ENCODE measurements at regions of chr13 and their contacts with region 1.

Region 1: DNA sequence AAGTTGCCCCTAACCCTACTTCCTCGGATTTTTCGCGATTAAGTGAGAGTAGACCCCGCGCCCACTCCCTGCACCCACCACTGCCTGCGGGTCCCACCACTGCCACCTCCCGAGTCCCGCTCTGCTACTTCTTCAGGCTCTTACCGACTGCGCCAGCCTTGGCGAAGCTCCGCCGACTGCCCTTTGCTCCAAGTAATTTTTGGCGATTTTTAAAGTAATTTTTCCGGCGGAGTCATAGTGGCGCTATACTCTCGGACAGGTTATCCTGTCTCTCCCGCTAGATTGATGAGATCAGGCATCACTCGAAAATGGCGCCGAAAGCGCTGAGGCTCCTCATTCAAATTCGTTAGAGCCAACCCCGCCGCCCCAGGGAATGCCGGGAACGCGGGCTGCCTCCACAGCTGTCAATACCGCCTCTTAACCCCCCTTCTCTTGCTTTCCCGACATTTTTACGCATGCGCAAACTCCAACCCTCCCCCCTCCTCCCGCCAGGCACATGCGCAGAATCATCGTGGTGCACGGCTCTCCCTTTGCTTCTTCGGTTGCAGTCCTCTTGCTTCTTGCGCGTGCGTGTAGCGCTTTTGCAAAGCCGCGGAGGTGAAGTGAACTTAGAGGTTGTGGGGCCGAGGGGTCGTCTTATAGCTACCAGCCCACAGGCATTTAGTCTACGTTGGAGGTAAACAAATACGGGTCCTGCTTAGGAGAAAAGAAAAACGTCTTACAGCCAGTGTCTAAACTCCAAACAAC is 66.6 kb downstream of the KCNRG start:
- DNase-seq: peak; percentile 98
- H3K4me3 ChIP-seq: peak overlapping the region; percentile 81 to 82
- H3K27ac ChIP-seq: peak overlapping the region; percentile 87 to 92
- H3K4me1 ChIP-seq: peaks cover 8% of the 10 kb centered on the region
- H3K27me3 ChIP-seq: no peaks in the 10 kb centered on the region
- CTCF ChIP-seq: peak in 1 of 3 experiments; percentile 2
- POLR2A ChIP-seq: peak; percentile 35

Region 2: GRCh38 chr13:49996951-49997895 is 84.6 kb before region 1 on chr13 and contains the start of gene TRIM13:
- intact Hi-C with region 1: loop called (anchors 5 kb)
- DNase-seq: peak; percentile 94
- H3K4me3 ChIP-seq: peak within 1 kb of the TSS; percentile 94 to 95
- H3K27ac ChIP-seq: peak within 1 kb of the TSS; percentile 98 to 100
- H3K4me1 ChIP-seq: peaks cover 18% of the 10 kb centered on the region
- H3K27me3 ChIP-seq: no peaks in the 10 kb centered on the region
- CTCF ChIP-seq: peak; percentile 62 to 69 (median 63)
- POLR2A ChIP-seq: peak; percentile 45
- total RNA-seq, gene TRIM13: 43.1 to 48.6 TPM

Region 3: DNA sequence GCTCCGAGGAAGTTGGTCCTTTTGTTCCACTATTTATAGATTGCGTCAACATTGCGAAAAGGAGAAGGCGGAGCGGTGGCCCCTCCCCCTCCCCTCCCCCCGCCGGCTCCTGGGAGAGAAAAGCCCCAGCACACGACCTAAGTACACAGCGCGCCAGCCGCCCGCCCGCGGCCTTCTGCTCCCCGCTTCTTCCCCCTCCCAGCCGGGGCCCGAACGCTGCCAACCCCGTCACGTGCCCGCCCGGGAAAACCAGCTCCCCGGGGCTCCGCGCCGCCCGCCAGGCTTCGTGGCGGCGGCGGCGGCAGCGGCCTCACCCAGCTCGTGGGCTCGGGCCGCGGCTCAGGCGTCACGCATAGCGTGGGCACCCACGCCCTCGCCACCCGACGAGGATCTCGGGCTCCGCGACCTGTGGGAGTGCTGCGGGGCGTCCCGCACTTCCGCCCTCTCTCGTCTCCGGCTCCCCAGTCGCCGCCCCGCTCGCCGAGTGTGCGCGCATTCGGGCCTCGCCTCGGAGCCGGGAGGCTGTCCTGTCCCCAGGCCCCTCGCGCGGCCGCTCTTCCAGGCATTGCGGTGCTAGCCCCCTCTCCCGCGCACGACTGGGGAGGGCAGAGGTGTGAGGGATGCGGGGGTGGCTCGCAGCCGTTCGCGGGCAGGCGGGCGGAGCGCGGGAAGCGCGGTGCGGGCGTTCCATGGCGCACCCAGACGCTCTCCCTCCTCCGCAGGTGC is 43.8 kb after region 1 on chr13:
- intact Hi-C with region 1: loop called (anchors 5 kb)
- DNase-seq: peak; percentile 92
- H3K4me3 ChIP-seq: peak overlapping the region; percentile 91
- H3K27ac ChIP-seq: peak overlapping the region; percentile 97 to 98
- H3K4me1 ChIP-seq: peaks cover 17% of the 10 kb centered on the region
- H3K27me3 ChIP-seq: peaks cover 5% of the 10 kb centered on the region
- CTCF ChIP-seq: no peak
- POLR2A ChIP-seq: no peak

Region 4: GRCh38 chr13:50393628-50394027 is 311.8 kb after region 1 on chr13:
- intact Hi-C with region 1: no loop called
- DNase-seq: no peak
- H3K4me3 ChIP-seq: no peak overlapping the region
- H3K27ac ChIP-seq: no peak overlapping the region
- H3K4me1 ChIP-seq: no peaks in the 10 kb centered on the region
- H3K27me3 ChIP-seq: no peaks in the 10 kb centered on the region
- CTCF ChIP-seq: no peak
- POLR2A ChIP-seq: no peak